ENCODE measurements at regions of chr7 and their contacts with region 1.

Region 1: DNA sequence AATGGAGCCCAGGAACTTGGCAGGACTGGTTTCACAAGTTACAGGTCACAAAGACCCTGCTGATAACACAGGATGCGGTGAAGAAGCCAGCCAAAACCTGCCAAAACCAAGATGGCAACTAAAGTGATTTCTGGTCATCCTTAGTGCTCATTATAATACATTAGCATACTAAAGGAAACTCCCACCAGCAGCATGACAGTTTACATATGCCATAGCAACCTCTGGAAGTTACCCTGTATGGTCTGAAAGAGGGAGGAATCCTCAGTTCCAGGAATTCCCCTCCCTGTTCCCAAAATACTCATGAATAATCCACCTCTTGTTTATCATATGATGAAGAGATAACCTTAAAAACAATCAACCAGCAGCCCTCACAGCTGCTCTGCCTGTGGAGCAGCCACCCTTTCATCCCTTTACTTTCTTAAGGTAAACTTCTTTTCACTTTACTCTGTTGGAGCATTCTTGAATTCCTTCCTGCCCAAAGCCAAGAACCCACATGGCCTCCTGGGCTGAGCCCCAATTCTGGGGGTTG is 21.9 kb downstream of the DPY19L1 start:
- DNase-seq: no peak
- H3K4me3 ChIP-seq: no peak overlapping the region
- H3K27ac ChIP-seq: no peak overlapping the region
- H3K4me1 ChIP-seq: no peaks in the 10 kb centered on the region
- H3K27me3 ChIP-seq: no peaks in the 10 kb centered on the region
- CTCF ChIP-seq: no peak

Region 2: GRCh38 chr7:35003679-35004303 is 11.6 kb before region 1 on chr7:
- CTCF ChIA-PET with region 1: no interaction called
- POLR2A ChIA-PET with region 1: interaction called, 13 read pairs
- intact Hi-C with region 1: no loop called
- DNase-seq: peak; percentile 88
- H3K4me3 ChIP-seq: no peak overlapping the region
- H3K27ac ChIP-seq: peak overlapping the region; percentile 83
- H3K4me1 ChIP-seq: peaks cover 19% of the 10 kb centered on the region
- H3K27me3 ChIP-seq: no peaks in the 10 kb centered on the region
- CTCF ChIP-seq: no peak